GM12878 (cell line): ENCODE measurements at regions of chr17 and their contacts with region 1.

Region 1: DNA sequence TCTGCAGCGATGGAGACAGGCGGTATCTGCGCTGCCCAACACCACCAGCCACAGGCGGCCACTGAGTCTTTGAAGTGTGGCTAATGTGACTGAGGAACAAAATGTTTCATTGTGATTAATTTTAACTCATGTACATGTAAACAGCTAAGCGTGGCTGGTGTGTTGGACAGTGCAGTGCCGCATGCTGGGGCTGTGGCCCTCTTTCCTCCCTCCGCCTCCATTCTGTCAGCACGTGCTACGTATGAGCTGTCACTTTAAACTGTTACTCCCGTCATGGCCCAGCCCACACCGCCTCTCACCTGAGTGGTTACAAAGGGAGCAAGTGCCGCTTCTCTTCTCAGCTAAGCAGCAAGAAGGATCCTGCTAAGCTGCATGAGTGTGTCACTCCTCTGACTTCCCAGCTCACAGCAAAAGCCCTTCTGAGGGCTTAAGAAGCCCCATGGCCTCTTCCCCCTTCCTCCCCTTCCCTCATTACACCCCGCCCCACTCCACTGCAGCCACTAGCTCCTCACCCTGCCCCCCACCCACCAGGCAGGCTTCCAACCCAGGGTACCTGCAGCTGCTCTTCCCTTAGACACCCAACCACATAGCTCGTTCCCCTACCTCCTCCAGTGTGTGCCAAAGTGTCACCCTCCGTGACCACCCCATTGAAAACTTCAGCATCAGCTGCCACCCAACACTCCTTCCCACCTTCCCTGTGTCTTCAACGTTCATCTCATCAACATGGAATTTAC is 15.0 kb downstream of the HASPIN start:
- DNase-seq: no peak
- ATAC-seq: peak; percentile 82
- H3K4me3 ChIP-seq: no peak overlapping the region
- H3K27ac ChIP-seq: no peak overlapping the region
- H3K4me1 ChIP-seq: 0 out of 2 replicates have a peak, but pooled peaks cover 2% of the 10 kb centered on the region
- H3K27me3 ChIP-seq: no peaks in the 10 kb centered on the region
- CTCF ChIP-seq: no peak
- EP300 ChIP-seq: no peak
- POLR2A ChIP-seq: no peak
- RAD21 ChIP-seq: no peak

Region 2: GRCh38 chr17:3048767-3049471 is 689.8 kb before region 1 on chr17:
- CTCF ChIA-PET with region 1: no interaction called
- POLR2A ChIA-PET with region 1: no interaction called
- RAD21 ChIA-PET with region 1: no interaction called
- SMC1A ChIA-PET with region 1: no interaction called
- in situ Hi-C with region 1: no loop called
- intact Hi-C with region 1: loop called (anchors 10 kb)
- DNase-seq: peak; percentile 78
- ATAC-seq: peak; percentile 100
- H3K4me3 ChIP-seq: peak overlapping the region; percentile 62
- H3K27ac ChIP-seq: no peak overlapping the region
- H3K4me1 ChIP-seq: no peaks in the 10 kb centered on the region
- H3K27me3 ChIP-seq: no peaks in the 10 kb centered on the region
- CTCF ChIP-seq: peak; percentile 59 to 77 (median 64)
- EP300 ChIP-seq: no peak
- POLR2A ChIP-seq: peak; percentile 55
- RAD21 ChIP-seq: peak; percentile 70

Region 3: DNA sequence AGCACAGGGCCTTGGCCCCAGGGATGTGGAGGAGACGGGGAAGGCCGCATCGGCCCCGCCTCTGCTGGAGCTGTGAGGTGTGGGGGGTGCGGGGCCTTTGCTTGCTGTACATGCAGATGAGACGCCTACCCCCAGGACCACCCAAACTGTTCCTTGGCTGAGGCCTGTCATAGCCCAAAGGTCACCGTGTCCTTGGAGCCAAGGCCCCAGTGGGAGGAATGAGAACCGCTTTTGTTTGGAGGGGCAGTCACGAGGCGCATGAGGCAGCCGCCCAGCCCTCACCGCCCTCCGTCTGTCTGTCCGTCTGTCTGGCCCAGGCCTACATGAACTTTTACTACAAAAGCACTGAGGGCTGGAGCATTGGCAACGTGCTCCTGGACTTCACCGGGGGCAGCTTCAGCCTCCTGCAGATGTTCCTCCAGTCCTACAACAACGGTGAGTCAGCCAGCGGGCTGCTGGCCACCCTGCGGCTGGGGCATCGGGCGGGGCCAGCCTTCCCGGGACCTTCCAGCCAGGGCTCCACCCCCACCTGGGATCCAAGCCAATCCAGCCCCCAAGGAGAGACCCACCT is 79.1 kb before region 1 on chr17:
- CTCF ChIA-PET with region 1: no interaction called
- POLR2A ChIA-PET with region 1: no interaction called
- RAD21 ChIA-PET with region 1: no interaction called
- SMC1A ChIA-PET with region 1: no interaction called
- in situ Hi-C with region 1: no loop called
- intact Hi-C with region 1: no loop called
- DNase-seq: no peak
- ATAC-seq: no peak
- H3K4me3 ChIP-seq: no peak overlapping the region
- H3K27ac ChIP-seq: no peak overlapping the region
- H3K4me1 ChIP-seq: no peaks in the 10 kb centered on the region
- H3K27me3 ChIP-seq: no peaks in the 10 kb centered on the region
- CTCF ChIP-seq: no peak
- EP300 ChIP-seq: no peak
- POLR2A ChIP-seq: no peak
- RAD21 ChIP-seq: no peak

Region 4: GRCh38 chr17:3710951-3711383 is 27.8 kb before region 1 on chr17:
- CTCF ChIA-PET with region 1: interaction called, 12 read pairs
- POLR2A ChIA-PET with region 1: no interaction called
- RAD21 ChIA-PET with region 1: interaction called, 14 read pairs
- SMC1A ChIA-PET with region 1: interaction called, 10 read pairs
- in situ Hi-C with region 1: no loop called
- intact Hi-C with region 1: no loop called
- DNase-seq: peak; percentile 100
- ATAC-seq: peak; percentile 98
- H3K4me3 ChIP-seq: no peak overlapping the region
- H3K27ac ChIP-seq: peak overlapping the region; percentile 68
- H3K4me1 ChIP-seq: peaks cover 27% of the 10 kb centered on the region
- H3K27me3 ChIP-seq: no peaks in the 10 kb centered on the region
- CTCF ChIP-seq: no peak
- EP300 ChIP-seq: peak; percentile 70 to 94; a peak in 3 of 4 replicates
- POLR2A ChIP-seq: no peak
- RAD21 ChIP-seq: no peak

Region 5: GRCh38 chr17:3762922-3763776 is 24.4 kb after region 1 on chr17:
- CTCF ChIA-PET with region 1: interaction called, 26 read pairs
- POLR2A ChIA-PET with region 1: interaction called, 3 read pairs
- RAD21 ChIA-PET with region 1: interaction called, 42 read pairs
- SMC1A ChIA-PET with region 1: interaction called, 22 read pairs
- in situ Hi-C with region 1: no loop called
- intact Hi-C with region 1: no loop called
- DNase-seq: peak; percentile 89
- ATAC-seq: peak; percentile 93
- H3K4me3 ChIP-seq: no peak overlapping the region
- H3K27ac ChIP-seq: peak overlapping the region; percentile 57
- H3K4me1 ChIP-seq: peaks cover 28% of the 10 kb centered on the region
- H3K27me3 ChIP-seq: no peaks in the 10 kb centered on the region
- CTCF ChIP-seq: no peak
- EP300 ChIP-seq: peak; percentile 92 to 93
- POLR2A ChIP-seq: 0 out of 2 replicates have a peak, but pooled peaks have one; percentile 32
- RAD21 ChIP-seq: 0 out of 2 replicates have a peak, but pooled peaks have one; percentile 1

Region 6: GRCh38 chr17:3812771-3813170 is 74.0 kb after region 1 on chr17:
- CTCF ChIA-PET with region 1: interaction called, 33 read pairs
- POLR2A ChIA-PET with region 1: no interaction called
- RAD21 ChIA-PET with region 1: interaction called, 15 read pairs
- SMC1A ChIA-PET with region 1: interaction called, 17 read pairs
- in situ Hi-C with region 1: no loop called
- intact Hi-C with region 1: no loop called
- DNase-seq: no peak
- ATAC-seq: no peak
- H3K4me3 ChIP-seq: no peak overlapping the region
- H3K27ac ChIP-seq: no peak overlapping the region
- H3K4me1 ChIP-seq: peaks cover 9% of the 10 kb centered on the region
- H3K27me3 ChIP-seq: no peaks in the 10 kb centered on the region
- CTCF ChIP-seq: no peak
- EP300 ChIP-seq: no peak
- POLR2A ChIP-seq: no peak
- RAD21 ChIP-seq: no peak

Region 7: DNA sequence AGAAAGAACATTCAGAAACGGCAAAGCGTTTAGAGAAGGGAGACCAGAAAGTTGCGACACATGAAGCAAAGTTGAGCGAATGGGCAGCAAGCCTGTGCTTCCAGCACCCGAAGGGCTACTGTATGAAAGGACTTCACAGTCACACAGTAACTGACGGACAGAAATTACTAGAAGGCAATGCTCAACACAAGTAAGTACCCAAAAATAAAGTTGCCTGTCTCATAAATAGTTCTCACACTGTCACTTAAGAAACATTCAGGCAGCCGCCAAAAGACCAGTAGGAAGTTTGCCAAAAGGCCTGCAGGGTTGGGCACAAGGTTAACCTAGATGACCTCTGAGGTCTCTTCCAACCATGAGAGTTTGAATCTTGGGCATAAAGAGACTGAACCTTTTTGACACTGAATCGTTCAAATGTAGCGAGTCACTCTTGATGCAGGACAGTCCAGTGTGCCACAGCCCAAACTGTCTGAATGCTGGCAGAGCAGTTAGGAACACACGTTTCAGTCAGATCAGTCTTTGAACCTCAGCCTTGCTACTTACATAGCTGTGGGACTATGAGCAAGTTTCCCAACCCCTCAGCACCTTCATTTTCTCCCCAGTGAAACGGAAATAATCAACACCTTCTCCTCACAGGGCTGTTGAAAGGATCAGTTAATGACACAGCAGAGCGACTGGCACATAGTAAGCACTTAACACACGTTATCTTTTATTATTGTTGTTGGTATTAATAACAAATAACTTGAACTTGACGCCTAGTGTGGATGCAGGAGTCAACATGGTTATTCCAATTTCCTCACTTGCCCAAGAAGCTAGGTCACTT is 96.9 kb after region 1 on chr17:
- CTCF ChIA-PET with region 1: interaction called, 371 read pairs
- POLR2A ChIA-PET with region 1: no interaction called
- RAD21 ChIA-PET with region 1: interaction called, 191 read pairs
- SMC1A ChIA-PET with region 1: interaction called, 255 read pairs
- in situ Hi-C with region 1: no loop called
- intact Hi-C with region 1: no loop called
- DNase-seq: no peak
- ATAC-seq: no peak
- H3K4me3 ChIP-seq: no peak overlapping the region
- H3K27ac ChIP-seq: no peak overlapping the region
- H3K4me1 ChIP-seq: no peaks in the 10 kb centered on the region
- H3K27me3 ChIP-seq: no peaks in the 10 kb centered on the region
- CTCF ChIP-seq: no peak
- EP300 ChIP-seq: no peak
- POLR2A ChIP-seq: no peak
- RAD21 ChIP-seq: no peak

Region 8: DNA sequence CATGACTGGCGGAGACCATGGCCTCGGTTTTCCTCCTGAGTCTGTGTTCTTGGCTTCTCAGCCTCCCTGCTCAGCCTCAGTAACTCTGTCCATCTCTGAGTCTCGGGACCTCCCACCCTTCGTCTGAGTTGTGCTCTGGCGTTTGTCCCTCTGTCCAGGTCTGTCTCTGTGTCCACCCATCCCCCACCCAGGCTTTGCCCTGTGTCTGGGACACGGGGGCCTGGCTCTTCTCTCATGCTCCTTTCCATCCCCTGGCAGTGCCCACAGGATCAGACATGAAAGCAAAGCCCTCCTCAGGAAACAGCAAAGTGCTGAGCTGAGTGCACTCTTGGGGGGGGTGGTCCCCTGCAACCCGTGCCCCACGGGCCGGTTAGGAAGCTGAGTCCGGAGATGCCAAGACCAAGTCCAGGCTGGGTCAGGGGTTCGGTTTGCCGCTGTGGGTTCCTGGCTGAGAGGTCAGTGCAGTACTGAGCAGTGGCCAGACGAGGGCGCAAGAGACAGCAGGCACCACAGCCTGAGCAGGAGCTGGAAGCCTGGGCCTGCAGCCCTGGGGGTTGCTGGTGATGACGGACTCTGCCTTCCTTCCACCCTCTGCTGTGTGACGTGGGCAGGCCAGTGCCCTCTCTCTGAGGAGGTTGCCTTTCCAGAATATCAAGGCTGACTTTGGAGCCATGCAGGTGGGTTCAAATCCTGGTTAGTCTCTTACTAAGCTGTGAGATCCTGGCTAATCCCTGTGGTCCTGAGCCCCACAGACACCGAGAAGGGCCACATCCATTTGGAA is 175.0 kb after region 1 on chr17:
- CTCF ChIA-PET with region 1: interaction called, 19 read pairs
- POLR2A ChIA-PET with region 1: no interaction called
- RAD21 ChIA-PET with region 1: interaction called, 8 read pairs
- SMC1A ChIA-PET with region 1: interaction called, 5 read pairs
- in situ Hi-C with region 1: no loop called
- intact Hi-C with region 1: no loop called
- DNase-seq: peak; percentile 56
- ATAC-seq: peak; percentile 73
- H3K4me3 ChIP-seq: peak overlapping the region; percentile 52
- H3K27ac ChIP-seq: peak overlapping the region; percentile 86
- H3K4me1 ChIP-seq: peaks cover 54% of the 10 kb centered on the region
- H3K27me3 ChIP-seq: no peaks in the 10 kb centered on the region
- CTCF ChIP-seq: peak; percentile 98 to 99 (median 99); a peak in 5 of 6 replicates
- EP300 ChIP-seq: no peak; a peak in 1 of 4 replicates
- POLR2A ChIP-seq: no peak
- RAD21 ChIP-seq: peak; percentile 88